Activated CD4-positive, alpha-beta T cell treated with anti-CD3 and anti-CD28 coated beads, Interleukin-2, amount 10 ng/mL, durations not matched to agents 24 days and 14 days (primary cell): ENCODE measurements at regions of chr9 and their contacts with region 1.

Region 1: GRCh38 chr9:113410207-113410864 is at the starts of genes C9orf43 and POLE3:
- DNase-seq: peak; percentile 99
- H3K4me3 Mint-ChIP-seq: peak within 1 kb of the TSS; percentile 97
- H3K27ac Mint-ChIP-seq: peak within 1 kb of the TSS; percentile 99
- H3K4me1 Mint-ChIP-seq: peaks cover 20% of the 10 kb centered on the region
- H3K27me3 Mint-ChIP-seq: no peaks in the 10 kb centered on the region
- total RNA-seq, gene C9orf43: 0.51 and 0.52 TPM in 2 replicates
- total RNA-seq, gene POLE3: 81.4 and 84.4 TPM in 2 replicates

Region 2: GRCh38 chr9:111631071-111631971 is 1779.0 kb before region 1 on chr9 and contains the start of gene DNAJC25:
- intact Hi-C with region 1: loop called (anchors 2 kb)
- DNase-seq: peak; percentile 99
- H3K4me3 Mint-ChIP-seq: peak within 1 kb of the TSS; percentile 98
- H3K27ac Mint-ChIP-seq: peak within 1 kb of the TSS; percentile 92
- H3K4me1 Mint-ChIP-seq: peaks cover 42% of the 10 kb centered on the region
- H3K27me3 Mint-ChIP-seq: no peaks in the 10 kb centered on the region
- total RNA-seq, gene DNAJC25: 7.1 and 7.5 TPM in 2 replicates

Region 3: GRCh38 chr9:113221003-113221799 is 189.1 kb before region 1 on chr9 and contains the starts of genes FKBP15 and SLC31A1:
- intact Hi-C with region 1: loop called (anchors 2 kb)
- DNase-seq: peak; percentile 99
- H3K4me3 Mint-ChIP-seq: peak within 1 kb of the TSS; percentile 94
- H3K27ac Mint-ChIP-seq: peak within 1 kb of the TSS; percentile 94
- H3K4me1 Mint-ChIP-seq: peaks cover 53% of the 10 kb centered on the region
- H3K27me3 Mint-ChIP-seq: no peaks in the 10 kb centered on the region
- total RNA-seq, gene FKBP15: 33.9 and 36.7 TPM in 2 replicates
- total RNA-seq, gene SLC31A1: 18.6 and 20.0 TPM in 2 replicates

Region 4: GRCh38 chr9:113309204-113309813 is 101.0 kb before region 1 on chr9:
- intact Hi-C with region 1: loop called (anchors 1 kb)
- DNase-seq: peak; percentile 79
- H3K4me3 Mint-ChIP-seq: no peak overlapping the region
- H3K27ac Mint-ChIP-seq: no peak overlapping the region
- H3K4me1 Mint-ChIP-seq: peaks cover 2% of the 10 kb centered on the region
- H3K27me3 Mint-ChIP-seq: peaks cover 3% of the 10 kb centered on the region

Region 5: GRCh38 chr9:113349445-113350094 is 60.8 kb before region 1 on chr9 and contains the start of gene BSPRY:
- intact Hi-C with region 1: loop called (anchors 1 kb)
- DNase-seq: peak; percentile 87
- H3K4me3 Mint-ChIP-seq: peak within 1 kb of the TSS; percentile 89
- H3K27ac Mint-ChIP-seq: peak within 1 kb of the TSS; percentile 90
- H3K4me1 Mint-ChIP-seq: peaks cover 56% of the 10 kb centered on the region
- H3K27me3 Mint-ChIP-seq: no peaks in the 10 kb centered on the region
- total RNA-seq, gene BSPRY: 10.5 and 10.6 TPM in 2 replicates

Region 6: GRCh38 chr9:113511856-113512761 is 101.8 kb after region 1 on chr9:
- intact Hi-C with region 1: loop called (anchors 2 kb)
- DNase-seq: peak; percentile 89
- H3K4me3 Mint-ChIP-seq: peak overlapping the region; percentile 74
- H3K27ac Mint-ChIP-seq: peak overlapping the region; percentile 96
- H3K4me1 Mint-ChIP-seq: peaks cover 64% of the 10 kb centered on the region
- H3K27me3 Mint-ChIP-seq: no peaks in the 10 kb centered on the region

Region 7: GRCh38 chr9:113578882-113579282 is 168.5 kb after region 1 on chr9:
- intact Hi-C with region 1: loop called (anchors 1 kb)
- DNase-seq: peak; percentile 96
- H3K4me3 Mint-ChIP-seq: peak overlapping the region; percentile 80
- H3K27ac Mint-ChIP-seq: peak overlapping the region; percentile 93
- H3K4me1 Mint-ChIP-seq: peaks cover 77% of the 10 kb centered on the region
- H3K27me3 Mint-ChIP-seq: no peaks in the 10 kb centered on the region